ENCODE measurements at regions of chr12 and their contacts with region 1.

Region 1: GRCh38 chr12:132608231-132609171 is 1.9 kb downstream of the LRCOL1 start:
- DNase-seq: peak; percentile 83
- ATAC-seq: peak; percentile 91
- H3K4me3 ChIP-seq: peak overlapping the region in 1 of 3 experiments; percentile 44; a peak in 2 of 6 replicates
- H3K27ac ChIP-seq: peak overlapping the region; percentile 65
- H3K4me1 ChIP-seq: peaks cover 39% of the 10 kb centered on the region
- H3K27me3 ChIP-seq: peaks cover 0 to 27% of the 10 kb centered on the region in 2 experiments; a peak in 4 of 5 replicates
- CTCF ChIP-seq: peak; percentile 9; the same call in 1 of the 2 replicates
- EP300 ChIP-seq: peak in 1 of 2 experiments; percentile 55; a peak in 2 of 4 replicates
- POLR2A ChIP-seq: no peak
- RAD21 ChIP-seq: no peak

Region 2: GRCh38 chr12:132429946-132430643 is 178.4 kb before region 1 on chr12:
- CTCF ChIA-PET with region 1: no interaction called
- POLR2A ChIA-PET with region 1: no interaction called
- in situ Hi-C with region 1: no loop called
- intact Hi-C with region 1: no loop called
- DNase-seq: no peak
- ATAC-seq: peak; percentile 17
- H3K4me3 ChIP-seq: peak overlapping the region in 1 of 3 experiments; percentile 65; a peak in 2 of 6 replicates
- H3K27ac ChIP-seq: no peak overlapping the region
- H3K4me1 ChIP-seq: peaks cover 77% of the 10 kb centered on the region
- H3K27me3 ChIP-seq: peaks cover 2 to 45% of the 10 kb centered on the region in 2 experiments
- CTCF ChIP-seq: peak; percentile 32; the same call in 1 of the 2 replicates
- EP300 ChIP-seq: no peak
- POLR2A ChIP-seq: no peak
- RAD21 ChIP-seq: no peak

Region 3: DNA sequence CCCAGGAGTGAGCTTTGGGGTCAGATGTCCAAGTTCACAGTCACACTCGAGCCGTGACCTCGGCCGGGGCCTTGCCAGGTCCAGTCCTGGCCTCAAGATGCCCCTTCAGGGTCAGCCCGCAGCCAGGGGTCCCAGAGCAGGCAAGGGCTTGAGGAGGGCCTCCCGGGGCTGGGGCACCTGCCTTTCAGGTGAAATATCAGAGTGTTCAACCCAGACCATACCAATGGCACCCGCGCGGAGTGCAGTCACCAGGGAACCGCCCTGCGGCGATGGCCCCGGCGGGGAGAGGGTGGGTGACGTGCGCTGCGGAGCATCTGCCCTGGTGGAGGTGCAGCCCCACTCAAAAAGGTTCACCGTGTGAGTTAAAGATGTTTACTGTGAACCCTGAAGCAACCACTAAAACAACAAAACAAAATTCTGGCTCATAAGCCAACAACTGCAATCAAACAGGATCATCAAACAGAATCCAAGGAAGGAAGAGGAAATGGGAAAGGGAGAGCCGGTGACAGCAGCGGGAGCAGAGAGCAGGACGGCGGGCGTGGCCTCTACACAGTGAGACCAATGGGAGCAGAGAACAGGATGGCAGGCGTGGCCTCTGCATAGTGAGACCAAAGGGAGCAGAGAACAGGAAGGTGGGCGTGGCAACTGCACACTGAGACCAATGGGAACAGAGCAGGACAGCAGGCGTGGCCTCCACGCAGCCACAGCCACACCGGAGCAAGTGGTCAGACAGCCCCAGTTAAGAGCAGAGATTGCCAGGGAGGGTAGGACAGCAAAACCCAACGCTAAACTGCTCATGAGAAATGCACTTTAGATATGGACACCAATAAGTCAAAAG is 14.8 kb before region 1 on chr12:
- CTCF ChIA-PET with region 1: no interaction called
- POLR2A ChIA-PET with region 1: no interaction called
- in situ Hi-C with region 1: no loop called
- intact Hi-C with region 1: loop called (anchors 1 kb)
- DNase-seq: peak; percentile 96
- ATAC-seq: peak; percentile 99
- H3K4me3 ChIP-seq: peak overlapping the region in 1 of 3 experiments; percentile 44; a peak in 2 of 6 replicates
- H3K27ac ChIP-seq: no peak overlapping the region
- H3K4me1 ChIP-seq: peaks cover 13% of the 10 kb centered on the region
- H3K27me3 ChIP-seq: peaks cover 9 to 52% of the 10 kb centered on the region in 2 experiments; a peak in 4 of 5 replicates
- CTCF ChIP-seq: no peak
- EP300 ChIP-seq: no peak
- POLR2A ChIP-seq: no peak
- RAD21 ChIP-seq: no peak